HEK293 (cell line): ENCODE measurements at regions of chr1 and their contacts with region 1.

Region 1: GRCh38 chr1:244325056-244325764 is 126.5 kb downstream of the ADSS2 start:
- H3K4me3 ChIP-seq: no peak overlapping the region
- H3K27ac ChIP-seq: no peak overlapping the region
- H3K4me1 ChIP-seq: no peaks in the 10 kb centered on the region; the same call in 1 of the 2 replicates
- CTCF ChIP-seq: no peak

Region 2: GRCh38 chr1:244197906-244198305 is 127.3 kb before region 1 on chr1:
- CTCF ChIA-PET with region 1: no interaction called
- POLR2A ChIA-PET with region 1: no interaction called
- H3K4me3 ChIP-seq: no peak overlapping the region
- H3K27ac ChIP-seq: no peak overlapping the region
- H3K4me1 ChIP-seq: no peaks in the 10 kb centered on the region
- CTCF ChIP-seq: no peak

Region 3: DNA sequence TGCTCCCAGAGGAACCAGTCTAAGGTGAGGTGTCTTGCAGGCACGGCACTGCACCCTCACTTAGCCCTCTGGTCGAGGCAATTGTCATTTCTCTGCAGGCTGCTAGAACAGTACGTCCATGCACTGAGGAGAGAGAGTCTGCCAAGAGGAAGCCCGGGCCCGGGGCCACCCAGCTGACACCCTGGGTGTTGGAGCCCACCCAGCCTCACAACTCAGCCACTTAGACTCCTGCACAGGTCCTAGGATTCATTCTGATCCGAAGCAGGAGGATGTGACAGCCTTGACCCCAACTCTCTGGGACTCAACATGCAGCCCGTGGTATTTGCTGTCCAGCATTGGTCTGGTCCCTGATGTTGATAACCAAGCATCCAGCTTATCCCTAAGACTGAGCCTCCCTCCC is 14.6 kb after region 1 on chr1:
- CTCF ChIA-PET with region 1: no interaction called
- POLR2A ChIA-PET with region 1: no interaction called
- H3K4me3 ChIP-seq: no peak overlapping the region
- H3K27ac ChIP-seq: no peak overlapping the region
- H3K4me1 ChIP-seq: no peaks in the 10 kb centered on the region
- CTCF ChIP-seq: no peak

Region 4: GRCh38 chr1:244353551-244354091 is 28.4 kb after region 1 on chr1:
- CTCF ChIA-PET with region 1: interaction called, 10 read pairs
- POLR2A ChIA-PET with region 1: no interaction called
- H3K4me3 ChIP-seq: no peak overlapping the region
- H3K27ac ChIP-seq: no peak overlapping the region
- H3K4me1 ChIP-seq: peaks cover 4% of the 10 kb centered on the region; the same call in 1 of the 2 replicates
- CTCF ChIP-seq: no peak

Region 5: DNA sequence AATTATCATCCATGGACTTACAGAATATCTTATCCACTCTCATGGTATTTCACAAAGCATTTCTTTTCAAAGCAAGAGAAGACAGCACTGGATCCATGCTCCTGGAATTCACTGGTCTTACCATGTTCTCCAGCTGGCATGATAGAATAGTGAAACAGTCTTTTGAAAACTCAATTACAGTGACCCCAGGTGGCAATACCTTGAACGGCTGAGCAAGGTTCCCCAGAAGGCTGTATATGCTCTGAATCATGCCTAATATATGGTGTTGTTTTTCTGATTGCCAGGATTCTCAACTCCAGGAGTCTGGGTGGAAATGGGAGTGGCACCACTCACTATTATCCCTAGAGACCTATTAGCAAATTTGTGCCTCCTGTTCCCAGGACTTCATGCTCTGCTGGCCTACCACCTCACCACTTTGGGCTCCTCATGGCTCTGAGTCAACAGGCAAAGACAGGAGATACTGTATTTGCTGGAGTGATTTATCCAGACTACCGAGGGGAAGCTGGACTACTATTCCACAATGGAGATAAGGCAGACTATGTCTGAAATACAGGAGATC is 223.4 kb after region 1 on chr1:
- CTCF ChIA-PET with region 1: no interaction called
- POLR2A ChIA-PET with region 1: no interaction called
- H3K4me3 ChIP-seq: no peak overlapping the region
- H3K27ac ChIP-seq: no peak overlapping the region
- H3K4me1 ChIP-seq: no peaks in the 10 kb centered on the region
- CTCF ChIP-seq: no peak